Tibial artery (tissue), 4 donors: ENCODE measurements at regions of chr5 and their contacts with region 1.

Region 1: GRCh38 chr5:174549254-174549653 is 175.1 kb upstream of the MSX2 start:
- DNase-seq: peak; percentile 49 to 70
- H3K4me3 ChIP-seq: no peak overlapping the region
- H3K27ac ChIP-seq: no peak overlapping the region
- H3K4me1 ChIP-seq: peaks cover 0 to 31% (median 18%) of the 10 kb centered on the region in 4 donors
- H3K27me3 ChIP-seq: no peaks in the 10 kb centered on the region
- CTCF ChIP-seq: no peak

Region 2: GRCh38 chr5:174425964-174426290 is 123.3 kb before region 1 on chr5:
- intact Hi-C with region 1: no loop called
- DNase-seq: no peak
- H3K4me3 ChIP-seq: no peak overlapping the region
- H3K27ac ChIP-seq: no peak overlapping the region
- H3K4me1 ChIP-seq: no peaks in the 10 kb centered on the region
- H3K27me3 ChIP-seq: peaks cover 0 to 21% of the 10 kb centered on the region in 2 donors
- CTCF ChIP-seq: no peak

Region 3: GRCh38 chr5:174472956-174473355 is 76.3 kb before region 1 on chr5:
- intact Hi-C with region 1: no loop called
- DNase-seq: no peak
- H3K4me3 ChIP-seq: no peak overlapping the region
- H3K27ac ChIP-seq: no peak overlapping the region
- H3K4me1 ChIP-seq: no peaks in the 10 kb centered on the region
- H3K27me3 ChIP-seq: no peaks in the 10 kb centered on the region
- CTCF ChIP-seq: no peak

Region 4: GRCh38 chr5:174724491-174725260 is 175.4 kb after region 1 on chr5 and contains the start of gene MSX2:
- intact Hi-C with region 1: loop called (anchors 10 kb)
- DNase-seq: peak; percentile 82 to 94
- H3K4me3 ChIP-seq: peak within 1 kb of the TSS; percentile 70 to 72
- H3K27ac ChIP-seq: peak within 1 kb of the TSS; percentile 86 to 88
- H3K4me1 ChIP-seq: peaks cover 0 to 34% (median 22%) of the 10 kb centered on the region in 4 donors
- H3K27me3 ChIP-seq: peaks cover 0 to 35% of the 10 kb centered on the region in 2 donors
- CTCF ChIP-seq: no peak